K562 (cell line): ENCODE measurements at regions of chr6 and their contacts with region 1.

Region 1: DNA sequence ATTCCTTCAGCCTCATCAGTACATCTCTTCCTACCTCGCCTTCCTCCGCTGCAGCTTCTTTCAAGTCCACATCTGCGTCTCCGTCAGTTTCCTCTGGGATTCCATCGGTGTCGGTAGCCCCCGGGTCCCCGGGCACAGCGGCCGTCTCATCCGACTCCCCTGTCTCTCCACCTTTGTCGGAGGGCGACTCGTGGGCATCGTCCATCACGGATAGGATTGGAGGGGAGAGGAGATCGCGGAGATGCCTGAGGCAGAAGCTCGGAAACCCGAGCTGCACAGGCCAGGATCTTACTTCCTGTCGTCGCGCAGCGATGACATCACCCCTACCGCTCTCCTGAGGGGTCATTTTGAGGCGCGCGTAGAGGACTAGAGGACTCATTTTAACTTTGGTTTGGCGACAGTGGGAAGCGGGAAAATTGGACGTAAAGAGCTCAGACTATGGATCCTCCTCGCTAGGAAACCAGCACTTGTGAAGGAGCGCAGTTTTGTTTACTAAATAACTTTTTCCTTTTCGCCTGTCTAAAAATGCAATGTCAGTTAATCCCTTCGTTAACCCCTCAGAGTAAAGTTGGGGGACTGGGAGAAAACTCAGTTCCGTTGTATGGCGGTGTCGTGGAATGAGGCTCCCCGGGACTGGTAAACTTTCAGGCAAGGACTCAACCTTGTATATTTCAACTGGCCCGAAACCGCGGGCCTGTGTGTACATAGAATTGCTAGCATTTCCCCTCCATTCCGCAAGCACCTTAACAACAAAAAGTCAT is at the start of gene TAF11:
- DNase-seq: peak; percentile 91 to 99 (median 92)
- ATAC-seq: peak; percentile 89
- H3K4me3 ChIP-seq: peak within 1 kb of the TSS; percentile 80
- H3K27ac ChIP-seq: peak within 1 kb of the TSS; percentile 96
- H3K4me1 ChIP-seq: peaks cover 11 to 19% of the 10 kb centered on the region in 2 experiments; a peak in 3 of 5 replicates
- H3K27me3 ChIP-seq: no peaks in the 10 kb centered on the region
- CTCF ChIP-seq: no peak; a peak in 1 of 6 replicates
- EP300 ChIP-seq: peak; percentile 50; the same call in 1 of the 2 replicates
- POLR2A ChIP-seq: peak; percentile 98
- RAD21 ChIP-seq: no peak
- polyA plus RNA-seq, gene TAF11: 42.0 to 44.9 TPM

Region 2: DNA sequence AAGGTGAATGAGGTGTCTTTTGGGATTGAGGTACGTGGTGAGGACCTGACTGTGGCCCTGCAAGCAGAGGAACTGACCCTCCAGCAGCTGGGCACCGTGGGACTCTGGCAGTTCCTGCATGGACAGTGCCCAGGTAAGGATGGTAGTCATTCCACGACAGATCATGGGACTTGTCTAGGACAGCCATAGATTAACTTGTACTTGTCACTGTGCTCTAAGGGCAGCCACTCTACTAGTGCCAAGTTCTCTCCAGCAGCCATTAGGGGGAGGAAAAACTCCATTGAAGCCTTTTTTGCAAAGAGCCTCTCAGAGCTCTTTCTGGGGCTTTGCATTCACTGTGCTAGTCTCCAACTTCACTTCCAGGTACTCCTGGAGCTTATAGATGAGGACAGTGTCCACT is 20.4 kb before region 1 on chr6:
- CTCF ChIA-PET with region 1: no interaction called
- POLR2A ChIA-PET with region 1: interaction called, 108 read pairs
- in situ Hi-C with region 1: no loop called
- intact Hi-C with region 1: no loop called
- DNase-seq: peak in 2 of 4 experiments; percentile 7 to 23
- ATAC-seq: no peak
- H3K4me3 ChIP-seq: no peak overlapping the region
- H3K27ac ChIP-seq: no peak overlapping the region
- H3K4me1 ChIP-seq: peaks cover 4 to 11% of the 10 kb centered on the region in 2 experiments; a peak in 4 of 5 replicates
- H3K27me3 ChIP-seq: no peaks in the 10 kb centered on the region
- CTCF ChIP-seq: peak in 1 of 3 experiments; percentile 29; a peak in 2 of 6 replicates
- EP300 ChIP-seq: no peak
- POLR2A ChIP-seq: no peak
- RAD21 ChIP-seq: peak in 1 of 2 experiments; percentile 25; a peak in 1 of 4 replicates

Region 3: GRCh38 chr6:34876472-34876871 is 11.5 kb before region 1 on chr6:
- CTCF ChIA-PET with region 1: no interaction called
- POLR2A ChIA-PET with region 1: interaction called, 108 read pairs
- in situ Hi-C with region 1: no loop called
- intact Hi-C with region 1: no loop called
- DNase-seq: no peak
- ATAC-seq: peak; percentile 12; the same call in 2 of the 3 replicates
- H3K4me3 ChIP-seq: no peak overlapping the region
- H3K27ac ChIP-seq: peak overlapping the region; percentile 5; the same call in 1 of the 3 replicates
- H3K4me1 ChIP-seq: no peaks in the 10 kb centered on the region; a peak in 1 of 5 replicates
- H3K27me3 ChIP-seq: no peaks in the 10 kb centered on the region
- CTCF ChIP-seq: no peak
- EP300 ChIP-seq: no peak
- POLR2A ChIP-seq: no peak
- RAD21 ChIP-seq: no peak

Region 4: DNA sequence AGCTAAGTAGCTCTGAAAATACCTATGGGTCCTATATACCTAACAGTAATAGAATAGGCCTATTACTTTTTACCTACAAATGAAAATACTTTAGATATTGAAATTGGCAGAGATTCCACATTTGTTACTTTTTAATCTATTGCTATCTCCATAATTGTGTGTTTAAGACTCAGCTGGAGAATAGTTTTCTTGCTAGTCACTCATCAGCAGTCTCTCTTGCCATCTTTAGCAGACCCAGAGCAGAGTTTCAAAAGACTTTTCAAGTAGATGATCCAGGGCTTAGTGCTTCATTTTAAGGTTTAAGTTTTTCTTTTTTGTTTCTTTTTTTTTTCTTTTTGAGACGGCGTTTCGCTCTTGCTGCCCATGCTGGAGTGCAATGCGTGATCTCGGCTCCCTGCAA is 14.0 kb after region 1 on chr6:
- CTCF ChIA-PET with region 1: no interaction called
- POLR2A ChIA-PET with region 1: interaction called, 51 read pairs
- in situ Hi-C with region 1: no loop called
- intact Hi-C with region 1: no loop called
- DNase-seq: no peak
- ATAC-seq: no peak
- H3K4me3 ChIP-seq: no peak overlapping the region
- H3K27ac ChIP-seq: no peak overlapping the region
- H3K4me1 ChIP-seq: no peaks in the 10 kb centered on the region
- H3K27me3 ChIP-seq: no peaks in the 10 kb centered on the region
- CTCF ChIP-seq: no peak
- EP300 ChIP-seq: no peak
- POLR2A ChIP-seq: no peak
- RAD21 ChIP-seq: no peak

Region 5: GRCh38 chr6:34922177-34922663 is 34.3 kb after region 1 on chr6:
- CTCF ChIA-PET with region 1: no interaction called
- POLR2A ChIA-PET with region 1: no interaction called
- in situ Hi-C with region 1: no loop called
- intact Hi-C with region 1: no loop called
- DNase-seq: peak in 1 of 4 experiments; percentile 20
- ATAC-seq: peak; percentile 62
- H3K4me3 ChIP-seq: no peak overlapping the region
- H3K27ac ChIP-seq: no peak overlapping the region
- H3K4me1 ChIP-seq: no peaks in the 10 kb centered on the region
- H3K27me3 ChIP-seq: no peaks in the 10 kb centered on the region
- CTCF ChIP-seq: no peak
- EP300 ChIP-seq: no peak
- POLR2A ChIP-seq: no peak
- RAD21 ChIP-seq: no peak

Region 6: DNA sequence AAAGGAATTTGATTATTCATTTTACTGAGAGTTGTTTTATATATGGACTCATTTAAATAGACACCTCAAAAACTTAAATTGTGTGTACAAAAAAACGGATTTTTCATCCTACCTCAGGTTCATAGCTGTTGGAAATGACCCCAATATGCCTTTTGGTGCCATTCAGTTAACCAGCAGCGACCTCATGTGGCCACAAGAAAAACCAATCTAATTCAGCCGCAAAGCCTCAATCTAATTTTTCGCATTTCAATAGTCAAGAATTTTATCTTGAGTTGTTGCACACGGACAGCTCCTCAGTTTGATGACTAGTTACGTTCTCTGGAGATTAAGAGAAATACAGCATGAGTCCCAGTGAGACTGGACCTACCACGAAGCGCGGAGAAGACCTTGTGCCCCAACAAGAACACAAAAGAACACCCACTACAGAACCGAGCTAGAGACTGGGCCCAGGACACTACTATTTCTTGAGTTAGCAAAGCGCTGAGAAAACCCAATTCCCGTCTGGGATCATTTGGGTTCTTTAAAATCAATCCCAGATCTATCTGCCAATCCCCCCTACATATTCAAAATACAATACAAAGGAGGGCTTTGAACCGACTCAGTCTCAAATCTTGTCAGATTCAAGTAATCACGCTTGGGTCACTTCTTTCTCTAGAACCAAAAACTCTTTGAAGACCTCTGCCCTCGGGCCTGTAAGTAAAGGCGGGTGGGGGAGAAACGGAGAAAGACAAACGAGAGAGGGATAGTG is 252.1 kb after region 1 on chr6:
- CTCF ChIA-PET with region 1: no interaction called
- POLR2A ChIA-PET with region 1: interaction called, 4 read pairs
- in situ Hi-C with region 1: no loop called
- intact Hi-C with region 1: loop called (anchors 10 kb)
- DNase-seq: peak; percentile 62 to 79 (median 66)
- ATAC-seq: peak; percentile 80
- H3K4me3 ChIP-seq: no peak overlapping the region
- H3K27ac ChIP-seq: no peak overlapping the region
- H3K4me1 ChIP-seq: peaks cover 0 to 13% of the 10 kb centered on the region in 2 experiments; a peak in 2 of 5 replicates
- H3K27me3 ChIP-seq: peaks cover 5 to 8% of the 10 kb centered on the region in 2 experiments; a peak in 4 of 5 replicates
- CTCF ChIP-seq: peak; percentile 85 to 97 (median 90)
- EP300 ChIP-seq: 0 out of 2 replicates have a peak, but pooled peaks have one; percentile 1
- POLR2A ChIP-seq: no peak
- RAD21 ChIP-seq: peak; percentile 97 to 98